ENCODE measurements at regions of chr19 and their contacts with region 1.

Region 1: GRCh38 chr19:47273313-47273977 is 1.2 kb upstream of the INAFM1 start:
- DNase-seq: peak; percentile 84 to 93 (median 89)
- H3K4me3 ChIP-seq: peak overlapping the region; percentile 68 to 98 (median 74)
- H3K4me3 Mint-ChIP-seq: peak overlapping the region; percentile 91 to 95
- H3K27ac ChIP-seq: peak overlapping the region; percentile 92 to 96
- H3K27ac Mint-ChIP-seq: peak overlapping the region; percentile 94 to 99 (median 98)
- H3K4me1 ChIP-seq: peaks cover 15 to 34% of the 10 kb centered on the region in 2 donors
- H3K4me1 Mint-ChIP-seq: peaks cover 27% of the 10 kb centered on the region
- H3K27me3 ChIP-seq: peaks cover 0 to 3% of the 10 kb centered on the region in 2 donors
- H3K27me3 Mint-ChIP-seq: peaks cover 2 to 11% (median 5%) of the 10 kb centered on the region in 3 donors
- CTCF ChIP-seq: no peak

Region 2: GRCh38 chr19:47256688-47257443 is 16.6 kb before region 1 on chr19:
- intact Hi-C with region 1: loop called (anchors 1 kb)
- DNase-seq: peak; percentile 99
- H3K4me3 ChIP-seq: peak overlapping the region; percentile 54 to 80 (median 58)
- H3K4me3 Mint-ChIP-seq: peak overlapping the region; percentile 84 to 93
- H3K27ac ChIP-seq: peak overlapping the region; percentile 83 to 95
- H3K27ac Mint-ChIP-seq: peak overlapping the region; percentile 95 to 99 (median 97)
- H3K4me1 ChIP-seq: peaks cover 15 to 19% of the 10 kb centered on the region in 2 donors
- H3K4me1 Mint-ChIP-seq: peaks cover 18% of the 10 kb centered on the region
- H3K27me3 ChIP-seq: no peaks in the 10 kb centered on the region
- H3K27me3 Mint-ChIP-seq: peaks cover 0 to 8% (median 5%) of the 10 kb centered on the region in 3 donors
- CTCF ChIP-seq: no peak

Region 3: GRCh38 chr19:47483800-47484690 is 210.6 kb after region 1 on chr19 and contains the start of gene KPTN:
- intact Hi-C with region 1: loop called in 1 of 2 experiments (anchors 5 kb)
- DNase-seq: peak; percentile 89 to 93 (median 92)
- H3K4me3 ChIP-seq: peak within 1 kb of the TSS; percentile 59 to 89 (median 88)
- H3K4me3 Mint-ChIP-seq: peak within 1 kb of the TSS; percentile 86 to 95
- H3K27ac ChIP-seq: peak within 1 kb of the TSS; percentile 31 to 96
- H3K27ac Mint-ChIP-seq: peak within 1 kb of the TSS; percentile 95 to 100 (median 99)
- H3K4me1 ChIP-seq: peaks cover 14 to 20% of the 10 kb centered on the region in 2 donors
- H3K4me1 Mint-ChIP-seq: peaks cover 35% of the 10 kb centered on the region
- H3K27me3 ChIP-seq: no peaks in the 10 kb centered on the region
- H3K27me3 Mint-ChIP-seq: peaks cover 6 to 8% (median 6%) of the 10 kb centered on the region in 3 donors
- CTCF ChIP-seq: peak; percentile 93
- polyA plus RNA-seq, gene KPTN: 9.5 to 9.7 (median 9.5) TPM

Region 4: GRCh38 chr19:47514869-47515588 is 241.6 kb after region 1 on chr19 and contains the start of gene NAPA:
- intact Hi-C with region 1: loop called in 1 of 2 experiments (anchors 10 kb)
- DNase-seq: peak; percentile 100
- H3K4me3 ChIP-seq: peak within 1 kb of the TSS; percentile 84 to 99 (median 99)
- H3K4me3 Mint-ChIP-seq: peak within 1 kb of the TSS; percentile 98
- H3K27ac ChIP-seq: peak within 1 kb of the TSS; percentile 98 to 100
- H3K27ac Mint-ChIP-seq: peak within 1 kb of the TSS; percentile 98 to 100 (median 99)
- H3K4me1 ChIP-seq: peaks cover 31 to 33% of the 10 kb centered on the region in 2 donors
- H3K4me1 Mint-ChIP-seq: peaks cover 46% of the 10 kb centered on the region
- H3K27me3 ChIP-seq: no peaks in the 10 kb centered on the region
- H3K27me3 Mint-ChIP-seq: peaks cover 0 to 13% (median 7%) of the 10 kb centered on the region in 3 donors
- CTCF ChIP-seq: no peak
- polyA plus RNA-seq, gene NAPA: 77.5 to 135 (median 111) TPM

Region 5: DNA sequence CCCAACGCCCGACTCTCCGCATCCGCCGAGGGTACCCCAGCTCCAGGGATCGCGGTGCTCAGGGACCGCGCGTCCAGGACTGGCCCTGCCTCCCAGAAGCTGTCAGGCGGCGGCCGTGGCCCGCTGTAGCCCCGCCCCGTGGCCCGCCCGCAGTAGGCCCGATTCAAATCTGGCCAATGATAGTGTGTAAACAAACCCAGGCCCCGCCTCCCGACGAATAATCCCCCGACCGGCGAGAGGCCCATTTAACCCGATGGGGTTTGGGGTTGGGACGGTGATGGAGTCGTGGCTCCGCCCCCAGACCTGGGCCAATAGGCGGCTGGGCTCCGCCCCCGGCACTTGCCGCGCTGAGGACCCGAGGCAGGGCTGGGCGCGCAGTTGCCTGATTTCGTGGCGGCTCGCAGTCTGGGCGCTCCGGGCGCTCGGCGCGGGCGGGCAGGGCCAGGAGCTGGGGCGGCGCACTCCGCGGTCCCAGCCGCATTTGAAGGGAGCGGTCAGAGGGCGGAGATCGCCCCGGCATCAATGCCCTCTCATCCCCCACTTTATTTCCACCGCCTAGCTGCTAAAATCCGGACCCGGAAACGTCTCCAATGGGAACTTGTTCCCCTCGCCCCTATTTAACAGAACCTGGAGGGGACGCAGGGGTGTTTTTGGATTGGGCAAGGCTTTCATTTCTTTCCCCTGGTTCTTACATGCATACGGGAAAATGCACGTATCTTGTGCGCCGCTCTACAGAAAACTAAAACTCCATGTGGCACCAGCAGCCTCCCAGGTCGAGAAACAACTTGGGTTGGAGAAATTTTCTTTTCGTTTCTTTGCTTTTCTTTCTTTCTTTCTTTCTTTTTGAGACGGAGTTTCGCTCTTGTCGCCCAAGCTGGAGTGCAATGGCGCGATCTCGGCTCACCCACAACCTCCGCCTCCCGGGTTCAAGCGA is 327.1 kb after region 1 on chr19:
- intact Hi-C with region 1: loop called in 1 of 2 experiments (anchors 10 kb)
- DNase-seq: peak; percentile 97 to 99 (median 99)
- H3K4me3 ChIP-seq: peak overlapping the region; percentile 42 to 77 (median 65)
- H3K4me3 Mint-ChIP-seq: peak overlapping the region; percentile 79 to 88
- H3K27ac ChIP-seq: peak overlapping the region; percentile 49 to 76
- H3K27ac Mint-ChIP-seq: peak overlapping the region; percentile 79 to 96 (median 90)
- H3K4me1 ChIP-seq: peaks cover 44 to 60% of the 10 kb centered on the region in 2 donors
- H3K4me1 Mint-ChIP-seq: peaks cover 64% of the 10 kb centered on the region
- H3K27me3 ChIP-seq: no peaks in the 10 kb centered on the region
- H3K27me3 Mint-ChIP-seq: peaks cover 1 to 20% (median 19%) of the 10 kb centered on the region in 3 donors
- CTCF ChIP-seq: no peak

Region 6: DNA sequence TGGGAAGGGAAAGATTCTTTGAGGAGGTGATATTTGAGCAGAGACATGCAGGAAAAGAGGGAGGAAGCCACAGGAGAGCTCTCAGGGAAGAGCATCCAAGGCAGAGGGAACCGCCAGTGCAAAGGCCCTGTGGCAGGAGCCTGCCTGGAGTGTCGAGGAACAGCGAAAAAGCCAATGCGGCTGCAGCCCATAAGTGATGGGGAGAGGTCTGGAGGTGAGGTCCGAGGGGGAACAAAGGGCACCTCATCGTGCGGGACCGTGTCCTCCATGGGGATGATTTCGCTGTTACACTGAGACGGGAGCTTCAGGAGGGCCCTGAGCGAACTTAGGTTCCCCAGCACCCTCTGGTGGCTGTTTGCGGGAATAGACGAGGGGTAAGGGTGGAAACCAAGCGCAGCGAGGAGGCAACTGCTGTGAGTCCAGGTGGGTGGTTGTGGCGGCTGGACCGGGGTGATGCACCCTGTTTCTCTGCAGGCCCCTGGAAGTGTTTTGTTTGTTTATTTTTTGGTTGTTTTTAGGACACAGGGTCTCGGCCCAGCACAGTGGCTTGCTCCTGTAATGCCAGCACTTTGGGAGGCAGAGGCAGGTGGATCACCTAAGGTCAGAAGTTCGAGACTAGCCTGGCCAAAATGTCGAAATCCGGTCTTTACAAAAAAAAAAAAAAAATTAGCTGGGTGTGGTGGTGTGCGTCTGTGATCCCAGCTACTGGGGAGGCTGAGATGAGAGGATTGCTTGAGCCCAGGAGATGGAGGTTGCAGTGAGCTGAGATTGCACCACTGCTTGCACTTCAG is 433.9 kb after region 1 on chr19:
- intact Hi-C with region 1: loop called in 1 of 2 experiments (anchors 10 kb)
- DNase-seq: peak; percentile 49 to 69 (median 60)
- H3K4me3 ChIP-seq: no peak overlapping the region
- H3K4me3 Mint-ChIP-seq: peak overlapping the region in 1 of 2 donors; percentile 32
- H3K27ac ChIP-seq: no peak overlapping the region
- H3K27ac Mint-ChIP-seq: no peak overlapping the region
- H3K4me1 ChIP-seq: no peaks in the 10 kb centered on the region
- H3K4me1 Mint-ChIP-seq: peaks cover 6% of the 10 kb centered on the region
- H3K27me3 ChIP-seq: peaks cover 0 to 2% of the 10 kb centered on the region in 2 donors
- H3K27me3 Mint-ChIP-seq: peaks cover 7 to 16% (median 12%) of the 10 kb centered on the region in 3 donors
- CTCF ChIP-seq: peak; percentile 82

Region 7: DNA sequence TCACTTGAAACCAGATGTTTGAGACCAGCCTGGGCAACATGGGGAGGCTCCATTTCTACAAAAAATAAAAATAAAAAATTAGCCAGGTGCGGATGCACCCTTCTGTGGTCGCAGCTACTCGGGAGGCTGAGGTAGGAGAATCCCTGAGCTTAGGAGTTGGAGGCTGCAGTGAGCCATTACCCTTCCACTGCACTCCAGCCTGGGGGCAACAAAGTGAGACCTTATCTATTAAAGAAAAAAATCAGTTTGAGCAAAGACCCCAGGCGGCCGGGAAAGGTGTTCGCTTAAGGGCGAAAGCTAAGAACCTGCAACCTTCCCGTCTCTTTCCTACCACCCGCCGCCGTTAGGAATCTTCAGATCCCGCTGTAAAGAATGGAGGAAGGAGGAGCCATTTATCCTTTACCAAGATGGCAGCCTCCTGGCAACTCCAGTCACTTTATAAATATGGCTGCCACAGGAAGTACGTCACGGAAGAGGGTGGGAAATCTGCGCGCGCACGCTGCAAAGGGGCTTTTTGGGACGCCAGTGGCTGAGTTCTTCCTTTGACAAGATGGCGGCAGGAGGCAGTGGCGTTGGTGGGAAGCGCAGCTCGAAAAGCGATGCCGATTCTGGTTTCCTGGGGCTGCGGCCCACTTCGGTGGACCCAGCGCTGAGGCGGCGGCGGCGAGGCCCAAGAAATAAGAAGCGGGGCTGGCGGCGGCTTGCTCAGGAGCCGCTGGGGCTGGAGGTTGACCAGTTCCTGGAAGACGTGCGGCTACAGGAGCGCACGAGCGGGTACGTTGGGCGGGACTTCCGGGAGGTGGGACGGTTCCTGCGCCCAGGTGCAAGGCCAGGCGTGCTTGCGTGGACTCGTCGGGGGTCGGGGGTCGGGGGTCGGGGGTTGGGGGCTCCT is 471.8 kb after region 1 on chr19 and contains the start of gene NOP53:
- intact Hi-C with region 1: loop called in 1 of 2 experiments (anchors 10 kb)
- DNase-seq: peak; percentile 95 to 97 (median 96)
- H3K4me3 ChIP-seq: peak within 1 kb of the TSS; percentile 72 to 85 (median 82)
- H3K4me3 Mint-ChIP-seq: peak within 1 kb of the TSS; percentile 94 to 96
- H3K27ac ChIP-seq: peak within 1 kb of the TSS; percentile 81 to 94
- H3K27ac Mint-ChIP-seq: peak within 1 kb of the TSS; percentile 95 to 100 (median 99)
- H3K4me1 ChIP-seq: peaks cover 34 to 46% of the 10 kb centered on the region in 2 donors
- H3K4me1 Mint-ChIP-seq: peaks cover 33% of the 10 kb centered on the region
- H3K27me3 ChIP-seq: no peaks in the 10 kb centered on the region
- H3K27me3 Mint-ChIP-seq: peaks cover 3 to 7% (median 4%) of the 10 kb centered on the region in 3 donors
- CTCF ChIP-seq: no peak
- polyA plus RNA-seq, gene NOP53: 47.5 to 193 (median 70.4) TPM

Measured in CD14-positive monocyte (primary cell).